CD8-positive, alpha-beta T cell (primary cell): ENCODE measurements at regions of chr5 and their contacts with region 1.

Region 1: GRCh38 chr5:169583424-169584204 is at the start of gene SPDL1:
- DNase-seq: peak; percentile 87 to 97 (median 93)
- ATAC-seq: peak; percentile 93
- H3K4me3 ChIP-seq: peak within 1 kb of the TSS; percentile 76 to 89
- H3K4me3 Mint-ChIP-seq: peak within 1 kb of the TSS; percentile 99
- H3K27ac ChIP-seq: peak within 1 kb of the TSS; percentile 65 to 74
- H3K27ac Mint-ChIP-seq: peak within 1 kb of the TSS; percentile 94
- H3K4me1 ChIP-seq: peaks cover 5% of the 10 kb centered on the region
- H3K4me1 Mint-ChIP-seq: peaks cover 21% of the 10 kb centered on the region
- H3K27me3 ChIP-seq: no peaks in the 10 kb centered on the region
- H3K27me3 Mint-ChIP-seq: no peaks in the 10 kb centered on the region
- CTCF ChIP-seq: no peak
- total RNA-seq, gene SPDL1: 5.2 to 6.9 TPM

Region 2: DNA sequence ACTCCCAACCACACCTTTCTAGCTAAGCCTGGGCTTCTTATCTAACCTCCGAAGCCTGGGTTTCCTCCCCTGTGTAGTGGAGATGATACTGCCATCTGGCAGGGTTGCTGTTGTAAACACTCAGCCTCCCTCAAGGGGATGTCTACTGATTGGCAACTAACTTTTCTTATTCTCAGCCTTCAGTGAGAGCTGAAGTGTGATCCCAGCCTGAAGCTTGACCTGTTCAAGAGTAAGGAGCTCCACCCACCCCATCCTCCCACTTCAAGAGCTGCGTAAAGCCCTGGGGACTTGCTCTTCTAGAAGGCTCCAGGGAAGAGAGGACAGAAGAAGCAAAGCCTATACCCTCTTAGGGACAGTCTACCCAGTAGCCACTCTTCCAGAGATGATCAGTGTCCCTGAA is 1313.6 kb before region 1 on chr5:
- CTCF ChIA-PET with region 1: no interaction called
- POLR2A ChIA-PET with region 1: no interaction called
- intact Hi-C with region 1: loop called in 1 of 2 experiments (anchors 10 kb)
- DNase-seq: no peak
- ATAC-seq: no peak
- H3K4me3 ChIP-seq: no peak overlapping the region
- H3K4me3 Mint-ChIP-seq: no peak overlapping the region
- H3K27ac ChIP-seq: no peak overlapping the region
- H3K27ac Mint-ChIP-seq: no peak overlapping the region
- H3K4me1 ChIP-seq: peaks cover 5% of the 10 kb centered on the region
- H3K4me1 Mint-ChIP-seq: peaks cover 10% of the 10 kb centered on the region
- H3K27me3 ChIP-seq: no peaks in the 10 kb centered on the region
- H3K27me3 Mint-ChIP-seq: peaks cover 25% of the 10 kb centered on the region
- CTCF ChIP-seq: no peak

Region 3: DNA sequence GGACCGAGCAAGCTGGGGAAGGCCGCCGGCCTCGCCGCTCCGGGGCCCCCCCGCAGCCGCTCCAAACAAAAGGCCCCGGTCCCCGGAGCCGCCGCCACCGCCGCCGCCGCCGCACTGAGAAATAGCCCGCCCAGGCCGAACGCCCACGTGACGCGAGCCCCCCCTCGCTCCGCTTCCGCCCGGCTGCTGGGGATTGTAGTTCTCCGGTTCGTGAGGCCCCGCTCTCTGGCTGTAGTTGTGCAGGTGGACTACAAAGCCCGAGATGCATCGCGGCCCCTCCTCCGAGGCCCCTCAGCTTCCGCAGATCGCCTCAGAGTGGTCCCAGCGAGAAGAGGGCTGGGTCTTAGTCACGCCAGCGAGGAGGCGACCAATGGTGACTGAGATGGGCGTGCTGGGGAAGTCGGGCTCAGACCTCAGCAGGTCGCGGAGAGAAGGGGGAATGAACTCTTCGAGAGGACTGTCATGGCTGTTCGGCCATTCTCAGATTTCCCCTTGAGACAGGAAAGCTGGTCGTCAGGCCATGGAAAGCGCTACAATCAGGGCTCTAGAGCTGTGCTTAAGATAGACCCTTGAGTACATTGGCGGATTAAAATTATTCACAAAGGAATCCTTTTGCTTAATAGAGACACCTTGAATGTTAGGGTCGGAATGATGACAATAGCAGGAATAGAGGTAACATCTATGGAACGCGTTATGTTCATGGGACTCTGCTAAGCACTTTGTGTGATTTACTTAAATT is 1004.0 kb before region 1 on chr5:
- CTCF ChIA-PET with region 1: no interaction called
- POLR2A ChIA-PET with region 1: interaction called, 6 read pairs
- intact Hi-C with region 1: loop called (anchors 2 kb)
- DNase-seq: peak; percentile 94 to 99 (median 97)
- ATAC-seq: peak; percentile 97
- H3K4me3 ChIP-seq: peak overlapping the region; percentile 60 to 74
- H3K4me3 Mint-ChIP-seq: peak overlapping the region; percentile 89
- H3K27ac ChIP-seq: peak overlapping the region; percentile 45 to 96
- H3K27ac Mint-ChIP-seq: peak overlapping the region; percentile 96
- H3K4me1 ChIP-seq: peaks cover 26% of the 10 kb centered on the region
- H3K4me1 Mint-ChIP-seq: peaks cover 41% of the 10 kb centered on the region
- H3K27me3 ChIP-seq: no peaks in the 10 kb centered on the region
- H3K27me3 Mint-ChIP-seq: peaks cover 2% of the 10 kb centered on the region
- CTCF ChIP-seq: no peak

Region 4: GRCh38 chr5:169569513-169569912 is 14.1 kb before region 1 on chr5:
- CTCF ChIA-PET with region 1: interaction called, 11 read pairs
- POLR2A ChIA-PET with region 1: no interaction called
- intact Hi-C with region 1: no loop called
- DNase-seq: no peak
- ATAC-seq: no peak
- H3K4me3 ChIP-seq: no peak overlapping the region
- H3K4me3 Mint-ChIP-seq: no peak overlapping the region
- H3K27ac ChIP-seq: no peak overlapping the region
- H3K27ac Mint-ChIP-seq: no peak overlapping the region
- H3K4me1 ChIP-seq: no peaks in the 10 kb centered on the region
- H3K4me1 Mint-ChIP-seq: no peaks in the 10 kb centered on the region
- H3K27me3 ChIP-seq: peaks cover 0 to 5% of the 10 kb centered on the region in 2 experiments
- H3K27me3 Mint-ChIP-seq: peaks cover 39% of the 10 kb centered on the region
- CTCF ChIP-seq: no peak

Region 5: DNA sequence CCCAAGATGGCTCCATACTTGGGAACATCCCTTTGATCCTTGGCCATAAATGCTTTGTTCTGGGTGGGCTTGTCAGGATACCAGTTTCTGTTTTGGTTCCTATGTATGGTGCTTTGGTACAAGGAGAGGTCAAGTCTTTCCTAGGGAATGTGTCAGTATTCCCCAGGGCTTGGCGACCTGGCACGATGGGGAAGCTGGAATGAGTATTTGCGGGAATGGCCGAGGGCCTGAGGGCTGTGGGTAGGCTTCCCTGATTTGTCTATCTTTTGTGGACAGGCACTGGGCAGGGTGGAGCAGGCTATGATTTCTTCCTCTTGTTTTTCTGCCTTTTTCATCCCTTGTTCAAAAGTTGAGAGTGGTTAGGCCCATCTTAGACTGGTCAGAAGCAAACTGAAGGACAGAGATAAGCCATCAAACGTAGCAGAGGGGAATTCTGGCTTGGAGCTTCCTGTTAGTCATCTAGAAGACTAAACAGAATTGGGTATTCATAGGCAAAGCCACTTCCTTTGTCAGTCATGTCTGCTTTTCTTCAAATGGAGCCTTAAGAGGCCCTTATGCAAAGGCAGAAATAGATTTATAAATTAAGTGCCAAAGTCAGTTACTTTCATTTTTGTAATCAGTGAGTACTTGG is 67.2 kb after region 1 on chr5:
- CTCF ChIA-PET with region 1: no interaction called
- POLR2A ChIA-PET with region 1: no interaction called
- intact Hi-C with region 1: loop called in 1 of 2 experiments (anchors 5 kb)
- DNase-seq: peak in 2 of 9 experiments; percentile 50 to 73
- ATAC-seq: peak; percentile 64
- H3K4me3 ChIP-seq: no peak overlapping the region
- H3K4me3 Mint-ChIP-seq: peak overlapping the region; percentile 66
- H3K27ac ChIP-seq: peak overlapping the region in 1 of 2 experiments; percentile 72
- H3K27ac Mint-ChIP-seq: peak overlapping the region; percentile 92
- H3K4me1 ChIP-seq: peaks cover 84% of the 10 kb centered on the region
- H3K4me1 Mint-ChIP-seq: peaks cover 99% of the 10 kb centered on the region
- H3K27me3 ChIP-seq: no peaks in the 10 kb centered on the region
- H3K27me3 Mint-ChIP-seq: no peaks in the 10 kb centered on the region
- CTCF ChIP-seq: no peak

Region 6: DNA sequence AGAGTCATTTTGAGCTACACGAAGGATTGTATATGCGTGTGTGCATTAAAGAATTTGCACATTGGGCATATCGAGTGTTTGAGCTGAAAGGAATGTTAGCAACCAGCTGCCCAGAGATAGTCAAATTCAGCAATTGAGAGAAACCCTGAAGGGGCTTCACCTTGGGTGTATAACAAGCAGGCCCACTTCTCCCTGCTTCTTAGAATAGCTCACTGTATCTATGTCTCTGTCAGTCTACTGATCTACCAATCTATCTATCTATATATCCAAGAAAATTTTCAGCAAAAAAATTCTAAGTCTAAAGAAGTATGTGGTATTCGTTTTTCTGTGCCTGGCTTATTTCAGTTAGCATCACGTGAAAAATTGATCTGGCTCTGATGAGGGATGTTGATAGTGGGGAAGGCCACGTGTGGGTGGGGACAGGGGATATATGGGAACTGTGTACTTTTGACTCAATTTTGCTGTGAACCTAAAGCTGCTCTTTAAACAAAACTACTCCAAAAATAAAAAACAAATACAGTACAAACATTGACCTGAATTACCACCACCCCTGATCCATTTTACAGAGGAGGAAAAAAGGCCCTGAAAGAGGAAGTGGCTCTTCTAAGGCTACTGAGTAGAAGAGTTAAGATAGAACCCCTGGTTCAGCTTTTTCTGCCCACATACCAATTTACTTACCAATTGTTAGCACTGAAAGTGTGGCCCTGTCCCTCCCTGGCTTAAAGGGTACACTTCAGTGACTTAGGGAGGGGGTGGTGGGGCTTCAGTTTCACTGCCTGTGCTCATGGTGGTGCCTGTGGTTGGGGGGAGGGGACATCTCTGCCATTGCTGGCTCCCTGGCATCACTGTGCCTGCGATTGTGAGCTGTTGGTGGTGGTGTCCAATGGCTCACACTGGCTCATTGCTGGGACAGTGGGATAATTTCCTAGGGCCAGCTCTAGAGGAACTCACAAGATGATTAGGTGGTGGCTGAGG is 195.3 kb after region 1 on chr5:
- CTCF ChIA-PET with region 1: no interaction called
- POLR2A ChIA-PET with region 1: no interaction called
- intact Hi-C with region 1: no loop called
- DNase-seq: no peak
- ATAC-seq: no peak
- H3K4me3 ChIP-seq: no peak overlapping the region
- H3K4me3 Mint-ChIP-seq: no peak overlapping the region
- H3K27ac ChIP-seq: no peak overlapping the region
- H3K27ac Mint-ChIP-seq: no peak overlapping the region
- H3K4me1 ChIP-seq: no peaks in the 10 kb centered on the region
- H3K4me1 Mint-ChIP-seq: no peaks in the 10 kb centered on the region
- H3K27me3 ChIP-seq: no peaks in the 10 kb centered on the region
- H3K27me3 Mint-ChIP-seq: no peaks in the 10 kb centered on the region
- CTCF ChIP-seq: no peak

Region 7: GRCh38 chr5:170522211-170523133 is 938.9 kb after region 1 on chr5:
- CTCF ChIA-PET with region 1: no interaction called
- POLR2A ChIA-PET with region 1: no interaction called
- intact Hi-C with region 1: no loop called
- DNase-seq: no peak
- ATAC-seq: no peak
- H3K4me3 ChIP-seq: no peak overlapping the region
- H3K4me3 Mint-ChIP-seq: no peak overlapping the region
- H3K27ac ChIP-seq: no peak overlapping the region
- H3K27ac Mint-ChIP-seq: no peak overlapping the region
- H3K4me1 ChIP-seq: no peaks in the 10 kb centered on the region
- H3K4me1 Mint-ChIP-seq: no peaks in the 10 kb centered on the region
- H3K27me3 ChIP-seq: no peaks in the 10 kb centered on the region
- H3K27me3 Mint-ChIP-seq: no peaks in the 10 kb centered on the region
- CTCF ChIP-seq: no peak